ENCODE measurements at regions of chr19 and their contacts with region 1.

Region 1: GRCh38 chr19:36489118-36489919 is at the start of gene ZNF566:
- DNase-seq: peak; percentile 97
- ATAC-seq: peak; percentile 93
- H3K4me3 Mint-ChIP-seq: peak within 1 kb of the TSS; percentile 86
- H3K27ac Mint-ChIP-seq: peak within 1 kb of the TSS; percentile 98
- H3K4me1 Mint-ChIP-seq: peaks cover 24% of the 10 kb centered on the region
- H3K27me3 Mint-ChIP-seq: no peaks in the 10 kb centered on the region
- total RNA-seq, gene ZNF566: 4.7 to 5.9 TPM

Region 2: GRCh38 chr19:36139473-36140303 is 349.6 kb before region 1 on chr19 and contains the start of gene CAPNS1:
- CTCF ChIA-PET with region 1: no interaction called
- POLR2A ChIA-PET with region 1: no interaction called
- intact Hi-C with region 1: loop called in 1 of 2 experiments (anchors 1 kb)
- DNase-seq: peak; percentile 96
- ATAC-seq: peak; percentile 74
- H3K4me3 Mint-ChIP-seq: peak within 1 kb of the TSS; percentile 97
- H3K27ac Mint-ChIP-seq: peak within 1 kb of the TSS; percentile 97
- H3K4me1 Mint-ChIP-seq: peaks cover 26% of the 10 kb centered on the region
- H3K27me3 Mint-ChIP-seq: no peaks in the 10 kb centered on the region
- total RNA-seq, gene CAPNS1: 345 to 452 TPM

Region 3: DNA sequence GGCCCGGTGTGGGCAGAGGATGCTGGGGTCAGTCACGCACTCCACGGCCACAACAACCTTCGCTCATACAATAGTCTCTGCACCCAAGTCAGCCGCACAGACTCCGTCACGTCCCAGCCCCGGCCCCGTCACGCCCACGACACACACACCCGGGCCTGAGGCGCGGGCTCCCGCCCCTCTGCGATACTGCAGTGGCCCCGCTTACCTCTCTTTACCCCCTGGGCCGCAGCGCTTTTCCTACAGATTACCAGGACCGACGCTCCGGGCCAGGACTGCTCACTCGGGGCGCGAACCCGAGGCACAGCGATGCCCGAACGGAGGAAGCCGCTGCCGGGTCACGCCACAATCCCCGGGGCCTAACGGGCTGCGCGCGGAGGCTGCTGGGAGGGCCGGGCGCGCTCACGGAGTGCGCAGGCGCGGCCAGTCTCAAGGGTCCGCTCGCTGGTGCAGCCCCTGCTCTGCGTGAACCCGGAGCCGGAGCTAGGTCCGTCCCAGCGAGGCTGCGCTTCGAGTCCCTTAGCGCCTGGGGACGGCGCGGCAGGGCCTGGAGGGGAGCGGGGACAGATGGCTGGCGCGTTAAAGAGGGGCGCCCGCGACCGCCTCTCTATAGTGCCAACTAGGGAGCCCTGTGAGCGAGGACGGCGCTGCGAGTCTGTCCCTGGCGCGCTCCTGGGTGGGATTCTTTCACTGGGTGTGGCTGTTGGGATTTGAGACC is 70.9 kb before region 1 on chr19 and contains the start of gene ZFP82:
- CTCF ChIA-PET with region 1: no interaction called
- POLR2A ChIA-PET with region 1: no interaction called
- intact Hi-C with region 1: loop called (anchors 1 kb)
- DNase-seq: peak; percentile 89
- ATAC-seq: peak; percentile 90
- H3K4me3 Mint-ChIP-seq: peak within 1 kb of the TSS; percentile 94
- H3K27ac Mint-ChIP-seq: peak within 1 kb of the TSS; percentile 97
- H3K4me1 Mint-ChIP-seq: peaks cover 12% of the 10 kb centered on the region
- H3K27me3 Mint-ChIP-seq: peaks cover 13% of the 10 kb centered on the region
- total RNA-seq, gene ZFP82: 8.4 to 8.8 TPM

Region 4: DNA sequence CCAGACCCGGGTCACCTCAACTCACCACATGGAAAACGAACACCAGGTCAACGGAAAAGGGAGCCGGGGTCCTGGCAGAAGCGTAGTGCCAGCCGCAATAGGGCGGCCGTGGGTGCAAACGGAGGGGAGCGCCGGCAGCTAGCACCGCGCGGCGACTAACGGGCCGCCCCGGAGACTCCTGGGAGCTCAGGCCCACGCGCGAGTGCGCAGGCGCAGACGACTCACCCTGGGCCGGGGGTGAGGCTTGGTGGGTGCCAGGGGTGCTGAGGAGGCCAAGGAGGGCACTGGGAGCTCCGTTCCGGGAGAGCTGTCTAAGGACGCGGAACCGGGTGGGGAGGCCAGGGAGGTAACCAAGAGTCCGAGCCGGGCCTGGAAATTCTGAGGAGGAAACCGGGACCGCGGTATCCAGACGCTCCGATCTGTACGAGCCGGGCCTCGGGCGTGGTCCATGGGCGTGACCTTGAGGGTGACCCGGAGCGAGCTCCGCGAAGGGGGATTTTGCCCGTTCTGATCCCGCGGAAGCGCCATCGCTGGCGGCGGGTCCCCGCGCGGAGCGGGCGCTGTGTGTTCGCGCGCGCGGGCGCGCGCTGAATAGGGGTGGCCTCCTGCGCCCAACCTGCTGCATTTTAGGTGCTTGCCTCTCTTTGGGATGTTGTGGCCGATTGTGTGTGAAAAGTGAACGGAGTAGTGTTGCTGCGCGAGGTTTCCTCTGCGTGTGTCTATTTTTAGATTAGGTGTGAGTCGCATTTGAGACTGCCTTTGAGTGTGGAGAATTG is 116.0 kb after region 1 on chr19 and contains the start of gene ZNF382:
- CTCF ChIA-PET with region 1: no interaction called
- POLR2A ChIA-PET with region 1: interaction called, 5 read pairs
- intact Hi-C with region 1: loop called in 1 of 2 experiments (anchors 1 kb)
- DNase-seq: peak; percentile 94
- ATAC-seq: peak; percentile 86
- H3K4me3 Mint-ChIP-seq: peak within 1 kb of the TSS; percentile 81
- H3K27ac Mint-ChIP-seq: peak within 1 kb of the TSS; percentile 91
- H3K4me1 Mint-ChIP-seq: peaks cover 20% of the 10 kb centered on the region
- H3K27me3 Mint-ChIP-seq: no peaks in the 10 kb centered on the region
- total RNA-seq, gene ZNF382: 14.9 to 20.0 TPM

Region 5: GRCh38 chr19:36672368-36672767 is 183.0 kb after region 1 on chr19:
- CTCF ChIA-PET with region 1: no interaction called
- POLR2A ChIA-PET with region 1: no interaction called
- intact Hi-C with region 1: no loop called
- DNase-seq: no peak
- ATAC-seq: no peak
- H3K4me3 Mint-ChIP-seq: no peak overlapping the region
- H3K27ac Mint-ChIP-seq: no peak overlapping the region
- H3K4me1 Mint-ChIP-seq: peaks cover 14% of the 10 kb centered on the region
- H3K27me3 Mint-ChIP-seq: no peaks in the 10 kb centered on the region

Region 6: DNA sequence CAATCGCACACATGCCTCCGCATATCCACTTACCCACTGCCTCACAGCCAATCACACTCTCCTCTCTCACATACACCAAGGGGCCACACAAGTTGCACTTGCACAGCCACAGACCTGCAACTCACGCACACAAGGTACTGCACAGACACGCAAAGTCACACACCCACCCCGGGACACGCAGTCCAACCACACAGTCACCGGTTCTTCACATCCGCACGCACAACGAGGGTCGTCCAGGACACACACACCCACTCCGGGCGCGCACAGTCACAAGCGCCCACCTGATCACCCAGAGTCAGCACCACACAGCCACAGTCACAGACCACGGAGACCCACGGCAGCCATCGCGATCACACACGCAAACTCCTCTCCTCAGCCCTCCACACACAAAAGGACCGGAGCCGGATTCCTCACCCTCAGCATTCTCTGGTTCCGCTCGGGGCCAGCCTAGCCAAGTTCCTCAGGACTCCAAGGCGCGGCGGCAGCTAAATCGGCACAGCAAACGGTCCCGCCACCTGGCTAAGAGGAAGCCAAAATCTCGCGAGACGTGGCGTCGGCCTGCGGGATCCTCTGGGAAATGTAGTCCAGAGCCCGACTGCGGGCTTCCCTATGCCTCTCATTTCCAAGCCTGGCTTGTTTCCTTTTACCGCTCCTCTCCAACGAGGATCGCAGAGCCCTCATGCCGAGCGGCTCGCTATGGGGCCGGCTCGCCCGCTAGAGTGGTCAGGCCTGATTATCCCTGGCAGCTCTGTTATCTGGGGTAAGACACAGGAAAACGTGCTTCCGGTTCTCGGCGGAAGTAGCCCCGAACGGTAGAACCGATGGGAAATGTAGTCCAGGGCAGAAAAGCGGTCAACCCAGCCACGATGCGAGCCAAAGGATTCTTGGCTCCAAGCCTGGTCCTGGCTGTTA is 283.2 kb after region 1 on chr19 and contains the start of gene ZNF850:
- CTCF ChIA-PET with region 1: no interaction called
- POLR2A ChIA-PET with region 1: no interaction called
- intact Hi-C with region 1: loop called in 1 of 2 experiments (anchors 1 kb)
- DNase-seq: peak; percentile 97
- ATAC-seq: peak; percentile 92
- H3K4me3 Mint-ChIP-seq: peak within 1 kb of the TSS; percentile 99
- H3K27ac Mint-ChIP-seq: peak within 1 kb of the TSS; percentile 97
- H3K4me1 Mint-ChIP-seq: peaks cover 20% of the 10 kb centered on the region
- H3K27me3 Mint-ChIP-seq: no peaks in the 10 kb centered on the region
- total RNA-seq, gene ZNF850: 7.0 to 10.7 TPM

Region 7: GRCh38 chr19:37594304-37594981 is 1105.1 kb after region 1 on chr19 and contains the starts of genes ZNF540 and ZNF571:
- CTCF ChIA-PET with region 1: no interaction called
- POLR2A ChIA-PET with region 1: no interaction called
- intact Hi-C with region 1: loop called in 1 of 2 experiments (anchors 1 kb)
- DNase-seq: peak; percentile 97
- ATAC-seq: peak; percentile 97
- H3K4me3 Mint-ChIP-seq: peak within 1 kb of the TSS; percentile 94
- H3K27ac Mint-ChIP-seq: peak within 1 kb of the TSS; percentile 99
- H3K4me1 Mint-ChIP-seq: peaks cover 27% of the 10 kb centered on the region
- H3K27me3 Mint-ChIP-seq: no peaks in the 10 kb centered on the region
- total RNA-seq, gene ZNF540: 0.67 to 1.1 TPM
- total RNA-seq, gene ZNF571: 2.4 to 2.9 TPM